ENCODE measurements at regions of chr12 and their contacts with region 1.

Region 1: GRCh38 chr12:127293507-127294310 is 973.3 kb upstream of the TMEM132C start:
- DNase-seq: no peak
- H3K4me3 ChIP-seq: no peak overlapping the region
- CTCF ChIP-seq: peak; percentile 96

Region 2: DNA sequence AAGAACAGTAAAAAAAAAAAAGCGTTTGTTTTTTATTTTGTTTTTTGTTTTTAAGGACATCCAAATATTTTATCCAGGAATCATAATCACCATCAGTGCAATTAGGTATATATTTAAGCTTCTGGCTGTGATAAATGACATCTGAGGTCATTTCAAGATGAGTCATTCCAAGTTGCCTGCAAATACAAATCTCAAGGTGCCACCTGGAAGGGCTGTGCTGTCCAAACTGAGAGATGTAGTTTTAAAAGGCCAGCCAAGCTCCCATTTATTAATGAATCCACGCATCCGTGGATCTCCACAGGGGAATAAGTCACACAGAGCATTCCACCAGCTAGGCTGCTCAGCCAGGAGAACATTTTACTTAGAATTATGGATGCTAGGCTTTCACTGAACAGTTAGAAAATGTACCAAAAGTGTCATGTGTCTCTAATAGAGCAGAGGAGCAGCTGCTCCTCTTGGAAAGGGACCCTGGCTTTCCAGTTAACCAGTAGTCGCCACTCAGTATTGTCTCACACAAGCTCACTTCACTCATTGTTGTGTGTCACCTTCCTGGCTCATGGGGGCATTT is 178.2 kb before region 1 on chr12:
- CTCF ChIA-PET with region 1: interaction called, 19 read pairs
- POLR2A ChIA-PET with region 1: no interaction called
- DNase-seq: no peak
- H3K4me3 ChIP-seq: no peak overlapping the region
- CTCF ChIP-seq: no peak

Region 3: DNA sequence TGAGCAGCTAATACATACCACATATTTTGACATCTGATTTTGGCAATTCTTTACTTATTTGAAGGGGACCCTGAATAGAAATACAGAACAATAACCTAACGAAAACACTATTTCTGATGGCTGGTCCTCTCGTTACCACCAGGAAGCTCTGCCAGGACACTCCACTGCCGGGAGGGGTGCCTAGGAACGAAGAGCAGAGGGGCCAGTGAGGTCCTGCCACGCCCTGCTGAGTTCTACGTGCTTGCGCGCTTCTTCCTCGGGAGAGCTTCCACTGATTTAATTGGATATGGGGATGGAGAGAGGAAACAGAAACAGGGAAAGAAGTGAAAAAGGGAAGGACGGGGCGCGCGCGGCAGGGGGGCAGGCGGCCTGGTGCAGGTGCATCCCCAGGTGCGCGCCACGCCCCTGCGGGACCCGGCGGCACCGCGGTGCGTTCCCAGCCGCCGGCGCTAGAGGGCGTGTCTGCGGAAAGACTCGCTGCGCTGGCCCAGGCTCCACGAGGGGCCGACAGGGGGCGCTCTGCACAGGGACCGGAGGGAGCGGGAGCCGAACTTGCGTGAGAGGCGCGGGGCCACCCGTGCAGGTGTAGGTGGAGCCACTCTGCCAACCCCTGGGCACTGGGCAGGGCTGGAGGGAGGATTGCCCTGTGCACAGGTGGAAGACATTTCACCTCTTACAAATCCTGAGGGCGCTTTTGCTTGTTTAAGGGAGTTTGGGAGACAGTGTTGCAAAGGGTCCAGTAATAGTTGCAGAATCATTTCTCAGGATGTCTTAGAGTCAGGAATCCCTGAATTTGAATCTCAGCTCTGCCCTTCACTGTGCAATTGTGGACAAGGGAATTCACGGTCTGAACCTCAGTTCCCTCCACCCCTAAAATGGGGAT is 13.1 kb before region 1 on chr12:
- CTCF ChIA-PET with region 1: interaction called, 11 read pairs
- POLR2A ChIA-PET with region 1: no interaction called
- DNase-seq: no peak
- H3K4me3 ChIP-seq: no peak overlapping the region
- CTCF ChIP-seq: peak; percentile 82

Region 4: DNA sequence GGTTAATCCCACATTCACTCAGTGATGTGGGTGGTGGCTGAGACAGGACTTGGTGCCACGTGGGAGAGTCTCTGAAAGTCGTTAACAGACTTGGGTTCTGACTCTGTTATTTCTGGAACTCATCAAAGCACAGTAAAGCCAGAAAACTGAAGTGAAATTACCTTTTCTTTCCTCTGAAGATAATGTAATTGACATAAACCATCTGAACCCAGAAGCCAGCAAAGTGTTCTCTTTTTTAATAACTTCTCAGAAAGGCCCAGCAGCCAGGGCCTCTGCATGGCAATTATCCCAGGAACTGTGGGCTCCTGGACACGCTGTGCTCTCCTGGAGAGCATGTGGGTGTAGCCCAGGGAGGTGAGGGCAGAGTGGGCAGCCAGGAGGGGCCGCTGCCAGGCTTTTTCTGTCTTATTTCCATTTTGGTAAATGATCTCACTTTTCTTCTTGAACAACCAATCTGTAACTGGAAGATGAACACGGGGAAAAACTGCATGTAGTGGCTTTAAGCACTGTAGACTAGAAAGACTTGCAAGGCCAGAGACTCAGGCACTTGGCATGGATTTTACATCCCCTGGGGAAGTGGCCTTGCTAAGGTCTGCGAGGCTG is 529.2 kb after region 1 on chr12:
- CTCF ChIA-PET with region 1: no interaction called
- POLR2A ChIA-PET with region 1: no interaction called
- DNase-seq: no peak
- H3K4me3 ChIP-seq: no peak overlapping the region
- CTCF ChIP-seq: no peak